RWPE1 (cell line): ENCODE measurements at regions of chr9 and their contacts with region 1.

Region 1: DNA sequence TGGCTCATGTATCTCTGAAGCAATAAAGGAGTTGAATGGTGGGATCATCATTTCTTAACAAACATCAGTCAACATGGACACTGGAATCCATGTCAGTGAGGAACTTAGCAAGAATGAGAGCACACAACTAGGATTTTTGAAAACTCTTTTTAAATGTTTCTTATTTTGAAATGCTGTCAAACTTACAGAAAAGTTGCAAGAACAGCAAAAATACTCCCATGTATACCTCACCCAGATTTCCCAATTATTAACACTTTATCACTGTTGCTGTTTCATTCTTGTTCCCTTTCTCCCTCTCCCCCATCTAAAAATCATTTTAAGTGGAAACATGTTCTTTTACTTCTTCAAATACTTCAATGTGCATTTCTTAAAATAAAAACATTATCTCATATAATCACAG is 65.5 kb downstream of the RORB start:
- DNase-seq: no peak
- H3K27ac ChIP-seq: no peak overlapping the region
- CTCF ChIP-seq: no peak

Region 2: DNA sequence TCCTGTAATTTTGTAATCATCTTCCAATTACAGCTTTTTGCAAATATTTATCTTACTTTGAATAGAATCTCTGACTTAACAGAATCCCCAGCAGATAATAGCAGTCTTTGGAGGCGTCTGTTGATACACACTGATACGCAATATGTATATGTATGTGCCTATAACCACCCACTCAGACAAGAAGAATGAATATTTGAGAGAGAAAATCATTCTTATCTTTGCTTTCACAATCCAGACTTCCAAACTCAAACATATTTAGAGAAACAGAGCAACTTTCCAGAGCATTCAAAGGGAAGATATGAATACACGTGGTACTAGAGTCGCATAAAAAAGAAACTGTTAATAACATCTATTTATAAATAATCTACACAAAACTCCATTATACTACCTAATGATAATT is 59.4 kb before region 1 on chr9:
- CTCF ChIA-PET with region 1: no interaction called
- POLR2A ChIA-PET with region 1: interaction called, 11 read pairs
- DNase-seq: no peak
- H3K27ac ChIP-seq: no peak overlapping the region
- CTCF ChIP-seq: no peak

Region 3: GRCh38 chr9:74595286-74595685 is 32.7 kb after region 1 on chr9:
- CTCF ChIA-PET with region 1: no interaction called
- POLR2A ChIA-PET with region 1: no interaction called
- DNase-seq: no peak
- H3K27ac ChIP-seq: no peak overlapping the region
- CTCF ChIP-seq: no peak